Aorta (tissue), 5 donors: ENCODE measurements at regions of chr15 and their contacts with region 1.

Region 1: DNA sequence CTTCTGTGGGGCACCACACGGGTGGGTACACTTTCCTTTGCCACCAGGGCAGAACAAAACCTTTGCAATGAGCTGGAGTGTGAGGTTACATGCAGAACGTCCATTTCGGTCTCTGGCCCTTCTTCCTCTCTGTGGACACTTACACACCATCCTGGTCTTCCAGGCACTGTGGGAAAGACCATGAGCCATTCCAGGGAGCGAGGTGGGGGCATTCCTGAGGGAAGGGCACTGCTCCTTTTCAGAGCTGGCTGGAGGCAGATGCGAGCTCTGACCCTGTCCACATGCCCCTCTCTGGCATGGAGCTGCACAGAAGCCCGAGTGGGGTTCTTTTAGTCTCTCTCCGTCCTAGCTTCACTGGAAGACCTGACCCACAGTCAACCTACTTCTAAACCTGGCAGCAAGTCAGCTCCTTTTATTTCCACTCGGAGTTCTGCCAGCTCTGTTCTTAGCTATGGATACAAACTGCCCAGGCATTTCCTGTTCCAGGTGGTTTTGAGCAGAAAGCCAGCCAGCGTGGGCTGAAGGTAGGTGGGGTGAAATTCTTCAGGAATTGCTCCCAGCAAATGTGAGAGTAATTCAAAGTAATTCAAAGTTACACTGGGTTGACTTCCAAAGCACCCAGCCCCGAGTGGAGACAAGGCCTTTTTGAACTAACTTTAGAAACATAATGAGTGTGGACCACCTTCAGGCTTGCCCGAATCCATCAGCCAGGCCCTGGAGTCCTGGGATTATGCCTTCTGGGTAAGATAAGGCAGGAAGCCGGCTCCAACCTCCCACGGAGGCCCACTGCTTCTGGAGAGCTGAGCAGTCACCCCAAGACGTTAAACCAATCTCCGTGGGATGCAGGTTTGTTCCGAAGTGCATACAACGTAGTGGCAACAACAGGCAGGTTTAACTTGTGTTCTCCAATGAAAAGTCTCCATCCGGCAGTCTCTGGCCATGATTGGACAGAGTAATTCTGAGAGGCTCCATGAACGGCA is 281.2 kb downstream of the ADAMTS17 start:
- DNase-seq: no peak
- ATAC-seq: no peak
- H3K4me3 ChIP-seq: no peak overlapping the region
- H3K27ac ChIP-seq: peak overlapping the region in 1 of 2 donors; percentile 73
- H3K4me1 ChIP-seq: peaks cover 0 to 4% of the 10 kb centered on the region in 2 donors
- H3K27me3 ChIP-seq: no peaks in the 10 kb centered on the region

Region 2: GRCh38 chr15:100043015-100043641 is 17.4 kb before region 1 on chr15:
- intact Hi-C with region 1: loop called in 1 of 2 experiments (anchors 1 kb)
- DNase-seq: no peak
- ATAC-seq: peak; percentile 60
- H3K4me3 ChIP-seq: peak overlapping the region in 1 of 2 donors; percentile 11
- H3K27ac ChIP-seq: peak overlapping the region; percentile 64 to 68
- H3K4me1 ChIP-seq: peaks cover 0 to 1% of the 10 kb centered on the region in 2 donors
- H3K27me3 ChIP-seq: no peaks in the 10 kb centered on the region

Region 3: DNA sequence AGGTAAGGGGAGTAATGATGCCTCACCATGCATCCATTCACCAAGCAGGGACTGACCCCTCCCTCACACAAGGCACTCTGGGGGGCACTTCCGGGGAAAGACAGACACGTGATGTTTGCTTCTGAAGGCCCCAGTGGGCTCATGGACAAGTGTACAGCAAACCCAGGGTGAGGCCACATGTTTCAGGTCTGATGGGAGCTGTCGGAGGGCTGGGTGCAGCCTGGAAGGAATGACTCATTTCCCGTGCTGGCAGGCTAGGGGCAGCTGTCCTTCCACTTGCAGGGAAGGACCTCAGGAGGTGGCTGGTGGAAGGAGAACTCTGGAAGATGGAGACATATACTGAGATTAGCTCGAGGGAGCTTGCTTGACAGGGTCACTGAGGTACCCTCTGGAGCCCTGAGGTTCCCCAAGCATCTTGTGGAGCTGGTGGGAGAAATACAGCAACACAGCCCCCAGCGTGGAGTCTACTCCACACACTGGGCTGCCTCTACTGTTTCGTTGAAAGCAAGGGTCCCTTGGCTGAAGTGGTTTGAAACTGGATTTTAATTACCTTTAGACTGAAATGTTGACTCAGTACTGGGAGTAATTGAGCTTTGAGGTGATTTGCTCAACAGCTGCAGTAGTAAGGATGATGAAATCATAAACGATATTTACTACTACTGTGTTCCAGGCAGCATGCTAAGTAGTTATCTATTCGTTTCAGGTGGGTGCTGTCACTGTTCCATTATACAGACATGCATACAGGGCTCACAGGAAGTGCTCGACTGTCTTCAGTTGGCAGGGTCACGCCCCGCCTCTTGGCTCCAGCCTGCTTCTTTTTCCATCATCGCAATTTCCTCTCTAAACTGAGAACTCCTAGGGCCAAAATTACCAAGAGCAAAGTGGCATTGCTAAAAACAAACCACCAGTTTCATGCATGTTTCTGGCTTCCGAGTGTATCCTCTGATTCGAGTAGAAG is 50.8 kb after region 1 on chr15:
- intact Hi-C with region 1: loop called in 1 of 2 experiments (anchors 5 kb)
- DNase-seq: peak; percentile 87 to 90
- ATAC-seq: peak; percentile 87
- H3K4me3 ChIP-seq: no peak overlapping the region
- H3K27ac ChIP-seq: peak overlapping the region; percentile 95 to 99
- H3K4me1 ChIP-seq: peaks cover 0 to 4% of the 10 kb centered on the region in 2 donors
- H3K27me3 ChIP-seq: no peaks in the 10 kb centered on the region